Dorsolateral prefrontal cortex (tissue), 120 donors: ENCODE measurements at regions of chrX and their contacts with region 1.

Region 1: DNA sequence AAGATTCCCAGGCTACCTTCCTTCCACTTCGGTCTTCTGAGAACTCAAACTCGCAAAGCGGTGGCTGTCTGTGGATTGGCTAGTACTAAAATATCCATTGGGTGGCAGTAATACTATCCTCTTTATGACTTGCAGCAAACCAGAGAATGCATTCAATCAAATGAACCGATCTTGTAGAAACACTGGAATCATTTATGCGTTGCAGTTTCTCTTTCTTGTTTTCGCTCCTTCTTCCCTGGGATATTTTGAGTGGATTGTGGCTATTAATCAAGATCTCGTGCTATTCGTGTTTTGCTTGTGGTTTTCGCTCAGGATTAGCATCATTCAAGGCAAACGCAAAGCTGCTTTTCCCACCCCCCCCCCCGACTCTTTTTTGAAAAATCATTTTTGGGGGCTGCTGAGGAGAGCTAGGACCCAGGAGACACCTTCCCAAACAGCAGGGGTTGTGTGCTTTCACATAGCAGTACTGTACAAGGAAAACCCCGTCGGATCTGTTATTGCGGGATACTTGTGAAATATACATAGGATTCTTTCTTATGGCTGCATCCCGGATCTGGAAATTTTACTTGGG is at the start of gene IL1RAPL1:
- DNase-seq: peak in 3 of 10 donors; percentile 34 to 49 (median 46)
- H3K4me3 ChIP-seq: peak within 1 kb of the TSS; percentile 33 to 77 (median 61)
- H3K27ac ChIP-seq: peak within 1 kb of the TSS in 57 of 59 donors; percentile 51 to 91 (median 83)
- H3K27me3 ChIP-seq: peaks cover 0 to 80% (median 19%) of the 10 kb centered on the region in 45 donors
- CTCF ChIP-seq: peak in 53 of 56 donors; percentile 11 to 71 (median 49)
- total RNA-seq, gene IL1RAPL1: 7.4 to 67.4 (median 29.0) TPM

Region 2: GRCh38 chrX:28675173-28675572 is 88.1 kb after region 1 on chrX:
- intact Hi-C with region 1: loop called in 1 of 2 experiments (anchors 10 kb)
- DNase-seq: no peak
- H3K4me3 ChIP-seq: no peak overlapping the region
- H3K27ac ChIP-seq: peak overlapping the region in 1 of 59 donors; percentile 1
- H3K27me3 ChIP-seq: peaks cover 0 to 30% (median 0%) of the 10 kb centered on the region in 45 donors
- CTCF ChIP-seq: no peak

Region 3: GRCh38 chrX:28693101-28693500 is 106.0 kb after region 1 on chrX:
- intact Hi-C with region 1: loop called in 1 of 2 experiments (anchors 10 kb)
- DNase-seq: peak in 1 of 10 donors; percentile 9
- H3K4me3 ChIP-seq: peak overlapping the region in 8 of 59 donors; percentile 1 to 29 (median 12)
- H3K27ac ChIP-seq: peak overlapping the region in 53 of 59 donors; percentile 4 to 91 (median 74)
- H3K27me3 ChIP-seq: peaks cover 0 to 32% (median 2%) of the 10 kb centered on the region in 45 donors
- CTCF ChIP-seq: no peak

Region 4: DNA sequence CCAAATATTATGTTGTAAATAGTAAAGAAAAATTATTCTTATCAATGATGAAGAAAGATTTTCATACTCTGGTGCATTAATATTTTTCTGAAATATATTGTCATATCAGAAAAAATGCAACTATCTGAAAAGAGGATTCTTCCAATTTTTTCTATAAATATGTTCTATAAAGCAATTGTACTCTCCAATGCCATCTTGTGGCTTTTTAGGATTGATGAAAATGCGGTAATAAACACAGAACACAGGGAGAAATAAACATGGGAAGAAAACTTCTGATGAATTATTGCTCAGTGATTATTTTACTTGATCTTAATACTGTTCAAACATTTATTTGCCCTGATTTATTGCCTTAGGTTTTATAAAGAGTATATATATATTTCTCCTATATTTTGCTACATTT is 215.6 kb after region 1 on chrX:
- intact Hi-C with region 1: loop called in 1 of 2 experiments (anchors 10 kb)
- DNase-seq: no peak
- H3K4me3 ChIP-seq: no peak overlapping the region
- H3K27ac ChIP-seq: peak overlapping the region in 36 of 59 donors; percentile 9 to 85 (median 56)
- H3K27me3 ChIP-seq: peaks cover 0 to 32% (median 0%) of the 10 kb centered on the region in 45 donors
- CTCF ChIP-seq: peak in 42 of 56 donors; percentile 8 to 58 (median 36)

Region 5: GRCh38 chrX:28847423-28847822 is 260.4 kb after region 1 on chrX:
- intact Hi-C with region 1: loop called in 1 of 2 experiments (anchors 5 kb)
- DNase-seq: peak; percentile 4 to 90 (median 75)
- H3K4me3 ChIP-seq: peak overlapping the region in 1 of 59 donors; percentile 28
- H3K27ac ChIP-seq: peak overlapping the region in 58 of 59 donors; percentile 49 to 96 (median 87)
- H3K27me3 ChIP-seq: peaks cover 0 to 48% (median 0%) of the 10 kb centered on the region in 45 donors
- CTCF ChIP-seq: peak in 3 of 56 donors; percentile 7 to 17 (median 15)

Region 6: DNA sequence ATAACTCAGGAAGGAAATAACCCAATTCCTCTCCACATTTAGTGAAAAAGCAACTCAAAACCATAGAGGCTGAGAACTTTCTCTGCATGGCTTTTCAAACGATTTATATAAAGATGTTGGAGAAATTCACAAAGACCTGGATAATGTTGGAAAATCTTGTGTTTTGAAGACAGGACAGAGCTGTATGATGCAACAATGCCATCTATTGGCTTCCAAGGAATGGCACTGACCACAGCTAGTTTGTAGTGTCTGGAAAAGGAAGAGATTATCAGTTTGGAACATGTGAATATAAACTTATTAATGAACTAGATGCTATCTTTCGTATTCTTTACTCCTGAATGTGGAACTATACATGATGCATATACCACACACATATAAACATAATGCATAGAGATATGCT is 503.7 kb after region 1 on chrX:
- intact Hi-C with region 1: loop called in 1 of 2 experiments (anchors 10 kb)
- DNase-seq: peak in 1 of 10 donors; percentile 18
- H3K4me3 ChIP-seq: no peak overlapping the region
- H3K27ac ChIP-seq: peak overlapping the region in 26 of 59 donors; percentile 8 to 76 (median 44)
- H3K27me3 ChIP-seq: peaks cover 0 to 26% (median 0%) of the 10 kb centered on the region in 45 donors
- CTCF ChIP-seq: peak in 55 of 56 donors; percentile 26 to 79 (median 54)

Region 7: DNA sequence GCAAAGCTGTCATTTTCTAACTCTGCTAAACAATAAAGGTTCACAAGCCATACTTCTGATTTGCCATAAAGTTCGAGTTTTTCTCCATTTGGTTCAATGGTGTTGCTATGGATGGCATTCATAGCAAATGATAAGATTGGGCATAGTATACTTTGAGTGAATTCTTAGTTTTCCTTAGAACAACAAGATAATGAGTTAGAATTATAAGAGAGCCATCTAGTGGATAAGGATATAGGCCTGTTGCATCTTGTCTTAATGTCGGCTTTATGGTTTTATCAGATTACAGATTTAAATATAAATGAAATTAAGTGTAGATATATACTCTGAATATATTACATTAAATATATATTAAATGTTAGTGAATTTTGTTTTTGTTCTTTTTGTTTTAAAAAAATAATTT is 644.7 kb after region 1 on chrX:
- intact Hi-C with region 1: loop called (anchors 5 kb)
- DNase-seq: no peak
- H3K4me3 ChIP-seq: no peak overlapping the region
- H3K27ac ChIP-seq: peak overlapping the region in 1 of 59 donors; percentile 23
- H3K27me3 ChIP-seq: peaks cover 0 to 30% (median 0%) of the 10 kb centered on the region in 45 donors
- CTCF ChIP-seq: peak in 52 of 56 donors; percentile 12 to 65 (median 46)